Right ventricle myocardium superior (tissue), 1 donor: ENCODE measurements at regions of chr6 and their contacts with region 1.

Region 1: DNA sequence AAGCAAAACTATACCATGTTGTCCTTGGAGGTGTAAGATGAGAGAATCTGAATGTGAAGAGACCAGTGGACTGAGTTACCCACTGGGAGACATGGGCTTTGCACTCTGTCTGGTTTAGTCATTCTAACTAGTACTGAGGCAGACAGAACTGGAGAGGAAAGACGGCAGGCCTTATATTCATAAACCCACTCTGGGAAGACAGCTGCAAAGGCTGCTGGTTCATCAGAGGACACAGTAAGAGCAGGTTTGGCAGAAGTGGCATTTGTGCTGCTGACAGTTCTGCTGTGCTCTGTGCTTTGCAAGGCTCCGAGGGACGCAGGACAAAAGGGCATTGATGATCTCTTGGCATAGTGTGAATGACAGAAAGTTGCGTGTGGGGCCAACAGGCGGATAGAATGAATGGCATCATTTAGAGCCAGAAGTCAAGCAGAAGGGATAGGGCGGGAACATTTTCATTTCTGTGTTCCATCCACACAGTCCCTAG is 142.3 kb upstream of the TENT5A start:
- DNase-seq: peak; percentile 77
- ATAC-seq: peak; percentile 94

Region 2: DNA sequence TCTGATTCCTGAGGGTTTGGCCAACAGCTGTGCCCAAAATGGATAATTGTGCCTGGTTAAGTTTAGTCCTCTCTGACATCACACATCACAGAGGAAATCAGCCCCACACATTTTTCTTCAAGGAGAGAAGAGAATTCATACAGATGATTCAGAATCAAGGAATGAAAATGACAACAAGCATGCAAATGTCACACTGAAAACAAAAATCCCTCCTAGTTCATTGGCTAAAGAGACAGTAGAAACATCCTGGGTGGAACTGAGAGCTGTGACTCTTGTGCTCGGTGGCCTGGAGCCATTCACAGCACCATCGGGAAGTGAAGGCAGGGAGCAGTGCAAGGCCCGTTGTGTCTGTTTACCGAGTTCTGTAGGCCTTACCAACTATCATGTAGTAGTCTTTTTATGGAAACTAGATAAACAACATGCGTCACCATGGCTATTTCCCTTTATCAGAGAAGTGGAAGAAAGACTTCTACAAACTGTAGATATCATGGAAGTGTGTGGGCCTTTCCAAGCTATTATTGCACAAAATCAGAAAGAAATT is 60.6 kb before region 1 on chr6:
- intact Hi-C with region 1: loop called (anchors 10 kb)
- DNase-seq: peak; percentile 74
- ATAC-seq: peak; percentile 96